Activated CD4-positive, alpha-beta memory T cell treated with anti-CD3 and anti-CD28 coated beads for 36 hours (primary cell): ENCODE measurements at regions of chr14 and their contacts with region 1.

Region 1: DNA sequence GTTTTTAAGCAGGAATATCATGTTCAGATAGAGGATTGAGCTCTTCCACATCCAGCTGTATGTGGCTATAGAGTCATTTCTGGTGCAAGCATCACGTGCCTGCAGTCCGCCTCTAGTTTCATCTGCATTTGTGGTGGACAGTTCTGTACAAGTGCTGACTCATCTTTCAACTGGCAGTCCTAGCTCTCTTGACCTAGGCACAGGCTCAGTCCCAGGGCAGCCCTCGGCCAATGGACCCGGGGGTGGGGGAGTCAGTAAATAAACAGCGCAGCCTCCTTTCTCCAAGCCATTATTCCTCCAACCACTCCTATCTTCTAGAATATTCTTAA is 41.8 kb upstream of the FRMD6 start:
- DNase-seq: no peak
- H3K4me3 Mint-ChIP-seq: no peak overlapping the region
- H3K27ac Mint-ChIP-seq: no peak overlapping the region
- H3K4me1 Mint-ChIP-seq: peaks cover 7% of the 10 kb centered on the region
- H3K27me3 Mint-ChIP-seq: peaks cover 3% of the 10 kb centered on the region

Region 2: DNA sequence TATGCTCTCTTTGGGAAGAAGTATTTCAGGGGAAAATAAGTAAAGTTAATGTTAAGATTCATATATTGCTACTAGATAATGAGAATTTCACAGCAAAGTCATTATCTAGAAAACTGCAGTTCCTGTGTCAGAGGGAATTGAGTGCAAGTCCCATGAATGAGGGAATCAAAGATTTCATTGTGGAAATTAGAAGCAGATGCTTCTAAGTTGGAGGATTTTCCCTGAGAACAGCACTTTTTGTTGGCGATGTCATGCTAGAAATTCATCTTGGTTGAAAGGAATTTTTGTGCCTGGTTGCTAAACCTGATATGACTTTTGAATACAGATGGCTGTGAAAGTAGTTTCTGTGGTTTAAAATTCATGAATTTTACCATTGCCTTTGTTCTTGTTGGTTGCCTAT is 67.3 kb after region 1 on chr14:
- CTCF ChIA-PET with region 1: no interaction called
- POLR2A ChIA-PET with region 1: no interaction called
- intact Hi-C with region 1: loop called (anchors 5 kb)
- DNase-seq: no peak
- H3K4me3 Mint-ChIP-seq: no peak overlapping the region
- H3K27ac Mint-ChIP-seq: no peak overlapping the region
- H3K4me1 Mint-ChIP-seq: peaks cover 18% of the 10 kb centered on the region
- H3K27me3 Mint-ChIP-seq: peaks cover 19% of the 10 kb centered on the region